MCF 10A (cell line): ENCODE measurements at regions of chr1 and their contacts with region 1.

Region 1: DNA sequence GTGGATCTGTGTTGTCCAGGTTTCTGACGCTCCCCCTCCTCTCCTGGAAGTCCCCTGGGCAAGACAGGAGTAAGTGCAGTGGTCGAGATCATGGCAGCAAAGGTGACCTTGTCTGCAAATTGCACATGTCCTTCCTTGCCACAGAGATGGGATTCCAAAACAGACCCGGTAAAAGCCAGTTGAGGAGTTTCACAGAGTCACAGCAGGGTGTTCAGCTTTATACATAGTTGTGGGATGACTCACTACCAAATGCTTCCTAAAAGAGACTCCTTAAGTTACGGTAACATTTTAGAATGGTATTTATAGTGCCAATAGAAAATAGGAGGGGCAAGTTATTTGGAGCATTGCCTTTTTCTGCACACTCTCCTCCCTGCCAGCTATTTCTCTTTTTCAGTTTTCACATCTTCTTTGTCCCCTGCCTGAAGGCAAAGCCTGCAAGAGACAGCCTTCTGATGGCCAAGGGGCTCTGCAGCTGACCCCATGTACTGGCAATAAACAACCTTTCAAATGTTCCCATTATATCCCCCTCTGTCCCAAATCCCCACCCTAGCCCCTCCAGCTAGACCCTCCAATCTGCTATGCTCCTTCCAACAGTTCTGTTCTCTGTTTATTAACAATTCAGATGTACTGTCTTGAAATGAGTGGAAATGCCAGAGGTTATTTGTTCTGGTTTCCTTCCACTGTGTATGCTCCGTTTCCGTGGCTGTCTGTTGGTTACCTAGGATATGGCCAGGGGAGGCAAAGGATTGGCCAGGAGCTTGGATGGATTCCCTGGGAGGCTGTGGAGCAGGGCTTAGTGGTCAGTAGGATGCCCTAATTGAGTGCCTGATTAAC is 115.0 kb downstream of the TGFB2 start:
- DNase-seq: peak; percentile 99
- H3K4me3 Mint-ChIP-seq: peak overlapping the region; percentile 34
- H3K27ac Mint-ChIP-seq: peak overlapping the region; percentile 85
- H3K4me1 Mint-ChIP-seq: peaks cover 38% of the 10 kb centered on the region
- H3K27me3 Mint-ChIP-seq: no peaks in the 10 kb centered on the region
- CTCF ChIP-seq: no peak

Region 2: DNA sequence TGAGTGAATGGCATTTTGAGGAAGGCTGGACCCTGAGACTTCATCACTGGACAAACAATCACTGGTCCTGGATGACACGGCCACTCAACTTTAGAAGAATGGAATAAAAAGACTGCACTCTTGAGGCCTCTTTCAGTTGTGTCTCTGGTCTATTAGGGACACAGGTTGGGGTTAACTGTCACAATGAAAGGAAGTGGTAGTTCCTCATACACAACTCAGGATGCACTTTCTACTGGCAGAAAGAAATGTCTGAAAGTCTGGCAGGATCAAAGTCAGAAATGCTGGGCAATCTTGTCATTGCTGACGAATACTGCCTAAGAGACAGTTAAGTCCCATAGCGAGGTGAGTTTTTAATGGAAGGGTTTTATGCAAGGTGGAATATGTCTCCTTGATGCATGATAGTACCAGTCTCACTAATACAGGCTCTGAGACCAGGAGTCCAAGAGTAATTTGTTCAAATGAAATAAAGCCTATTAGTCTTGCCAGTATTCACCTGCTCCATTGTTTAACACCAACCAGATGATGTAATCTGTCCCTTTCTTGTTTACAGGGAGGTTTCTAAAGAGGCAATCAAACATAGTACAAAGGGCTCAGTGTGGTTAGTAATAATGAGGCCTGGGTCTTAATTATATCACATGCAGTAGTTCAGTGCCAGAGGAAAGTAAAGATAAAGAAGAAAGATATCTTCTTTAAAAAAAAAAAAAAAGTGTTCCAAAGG is 186.2 kb before region 1 on chr1:
- CTCF ChIA-PET with region 1: no interaction called
- POLR2A ChIA-PET with region 1: no interaction called
- intact Hi-C with region 1: no loop called
- DNase-seq: no peak
- H3K4me3 Mint-ChIP-seq: no peak overlapping the region
- H3K27ac Mint-ChIP-seq: no peak overlapping the region
- H3K4me1 Mint-ChIP-seq: no peaks in the 10 kb centered on the region
- H3K27me3 Mint-ChIP-seq: peaks cover 66% of the 10 kb centered on the region
- CTCF ChIP-seq: no peak

Region 3: GRCh38 chr1:218377143-218377660 is 82.9 kb before region 1 on chr1:
- CTCF ChIA-PET with region 1: interaction called, 3 read pairs
- POLR2A ChIA-PET with region 1: interaction called, 7 read pairs
- intact Hi-C with region 1: loop called (anchors 1 kb)
- DNase-seq: peak; percentile 99
- H3K4me3 Mint-ChIP-seq: peak overlapping the region; percentile 39
- H3K27ac Mint-ChIP-seq: peak overlapping the region; percentile 88
- H3K4me1 Mint-ChIP-seq: peaks cover 74% of the 10 kb centered on the region
- H3K27me3 Mint-ChIP-seq: no peaks in the 10 kb centered on the region
- CTCF ChIP-seq: no peak

Region 4: GRCh38 chr1:218426343-218426657 is 33.8 kb before region 1 on chr1:
- CTCF ChIA-PET with region 1: no interaction called
- POLR2A ChIA-PET with region 1: interaction called, 11 read pairs
- intact Hi-C with region 1: no loop called
- DNase-seq: peak; percentile 99
- H3K4me3 Mint-ChIP-seq: no peak overlapping the region
- H3K27ac Mint-ChIP-seq: peak overlapping the region; percentile 53
- H3K4me1 Mint-ChIP-seq: peaks cover 18% of the 10 kb centered on the region
- H3K27me3 Mint-ChIP-seq: no peaks in the 10 kb centered on the region
- CTCF ChIP-seq: no peak

Region 5: GRCh38 chr1:218439541-218440295 is 20.4 kb before region 1 on chr1:
- CTCF ChIA-PET with region 1: interaction called, 4 read pairs
- POLR2A ChIA-PET with region 1: interaction called, 11 read pairs
- intact Hi-C with region 1: no loop called
- DNase-seq: no peak
- H3K4me3 Mint-ChIP-seq: no peak overlapping the region
- H3K27ac Mint-ChIP-seq: no peak overlapping the region
- H3K4me1 Mint-ChIP-seq: no peaks in the 10 kb centered on the region
- H3K27me3 Mint-ChIP-seq: no peaks in the 10 kb centered on the region
- CTCF ChIP-seq: no peak

Region 6: GRCh38 chr1:218537122-218537904 is 77.2 kb after region 1 on chr1:
- CTCF ChIA-PET with region 1: no interaction called
- POLR2A ChIA-PET with region 1: no interaction called
- intact Hi-C with region 1: loop called (anchors 5 kb)
- DNase-seq: peak; percentile 74
- H3K4me3 Mint-ChIP-seq: peak overlapping the region; percentile 5
- H3K27ac Mint-ChIP-seq: peak overlapping the region; percentile 98
- H3K4me1 Mint-ChIP-seq: peaks cover 36% of the 10 kb centered on the region
- H3K27me3 Mint-ChIP-seq: no peaks in the 10 kb centered on the region
- CTCF ChIP-seq: no peak